Activated B cell treated with CpG ODN at 0.5 μM for 24 hours (primary cell): ENCODE measurements at regions of chr6 and their contacts with region 1.

Region 1: DNA sequence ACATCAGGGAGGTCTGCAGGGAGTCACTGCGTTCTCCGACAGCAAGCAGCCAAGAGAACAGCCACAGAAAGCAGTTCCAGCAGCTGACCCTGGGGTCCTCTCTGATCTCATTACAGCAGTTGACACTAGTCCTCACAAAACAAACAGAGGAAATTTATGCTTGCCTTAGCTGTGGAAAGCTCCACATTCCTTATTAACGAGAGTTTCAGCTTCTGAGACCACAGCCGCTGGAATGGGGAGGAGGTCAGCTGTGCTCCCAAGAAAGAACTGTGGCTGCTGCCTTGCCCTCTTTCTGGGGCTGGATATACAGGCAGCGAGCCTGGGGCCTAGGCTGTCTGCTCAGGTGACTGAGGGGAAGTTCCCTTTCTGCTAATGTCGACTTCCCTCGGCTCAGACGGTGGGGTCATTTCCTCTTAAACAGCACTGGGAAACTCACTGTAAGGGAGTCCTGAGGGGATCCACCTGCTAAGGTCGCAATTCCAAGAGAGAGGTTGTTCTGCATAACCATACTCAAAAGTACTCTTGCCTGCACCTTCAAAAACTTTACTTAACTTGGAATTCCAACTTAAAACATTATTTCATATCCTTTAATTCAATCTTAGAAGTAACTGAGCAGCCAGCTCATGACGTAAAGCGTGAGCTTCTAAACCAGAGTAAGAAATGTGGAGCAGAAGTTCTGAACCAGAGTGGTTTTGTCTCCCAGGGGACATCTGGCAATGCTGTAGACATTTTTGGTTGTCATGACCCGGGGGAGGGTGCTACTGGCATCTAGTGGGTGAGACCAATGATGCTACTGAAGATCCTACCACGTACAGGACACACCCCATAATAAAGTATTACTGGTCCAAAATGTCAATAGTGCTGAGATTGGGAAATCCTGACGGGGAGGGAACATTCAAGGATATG is 80.3 kb downstream of the BACH2 start:
- DNase-seq: peak; percentile 52
- ATAC-seq: peak; percentile 80
- H3K4me3 Mint-ChIP-seq: peak overlapping the region; percentile 73
- H3K27ac Mint-ChIP-seq: no peak overlapping the region
- H3K4me1 Mint-ChIP-seq: peaks cover under 1% of the 10 kb centered on the region
- H3K27me3 Mint-ChIP-seq: no peaks in the 10 kb centered on the region
- CTCF ChIP-seq: no peak

Region 2: DNA sequence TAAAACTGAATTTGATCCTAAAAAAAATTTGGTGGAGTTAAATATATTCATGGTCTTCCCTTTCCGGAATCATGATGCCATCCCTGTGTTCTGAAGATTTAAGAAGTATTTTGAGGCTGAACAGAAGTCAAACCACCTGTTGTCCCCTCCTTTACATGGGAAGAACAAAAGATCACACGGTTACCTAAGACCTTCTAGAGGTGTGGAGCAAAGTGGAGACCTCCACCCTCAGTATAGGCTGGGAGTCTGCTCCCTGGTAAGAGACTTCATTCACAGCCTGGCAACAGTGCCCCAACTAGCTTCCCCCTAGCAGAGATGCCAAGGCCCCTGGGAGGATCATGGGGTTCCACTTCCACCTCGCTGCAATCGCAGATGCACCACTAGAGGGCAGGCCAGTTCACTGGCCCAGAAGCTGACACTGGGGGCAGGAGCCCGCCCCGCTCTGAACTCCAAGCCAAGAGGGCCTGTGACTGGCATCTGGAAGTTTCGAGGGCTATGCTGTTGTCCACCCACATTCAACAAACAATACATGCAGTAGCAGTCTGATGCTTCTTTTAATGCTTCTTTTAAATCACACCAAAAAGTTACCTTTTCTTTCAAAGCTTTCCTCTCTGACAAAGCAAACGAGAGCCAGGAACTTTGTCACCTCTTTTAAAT is 844.3 kb before region 1 on chr6:
- CTCF ChIA-PET with region 1: no interaction called
- POLR2A ChIA-PET with region 1: interaction called, 10 read pairs
- intact Hi-C with region 1: no loop called
- DNase-seq: peak; percentile 74
- ATAC-seq: peak; percentile 93
- H3K4me3 Mint-ChIP-seq: no peak overlapping the region
- H3K27ac Mint-ChIP-seq: no peak overlapping the region
- H3K4me1 Mint-ChIP-seq: peaks cover 41% of the 10 kb centered on the region
- H3K27me3 Mint-ChIP-seq: no peaks in the 10 kb centered on the region
- CTCF ChIP-seq: peak; percentile 49

Region 3: DNA sequence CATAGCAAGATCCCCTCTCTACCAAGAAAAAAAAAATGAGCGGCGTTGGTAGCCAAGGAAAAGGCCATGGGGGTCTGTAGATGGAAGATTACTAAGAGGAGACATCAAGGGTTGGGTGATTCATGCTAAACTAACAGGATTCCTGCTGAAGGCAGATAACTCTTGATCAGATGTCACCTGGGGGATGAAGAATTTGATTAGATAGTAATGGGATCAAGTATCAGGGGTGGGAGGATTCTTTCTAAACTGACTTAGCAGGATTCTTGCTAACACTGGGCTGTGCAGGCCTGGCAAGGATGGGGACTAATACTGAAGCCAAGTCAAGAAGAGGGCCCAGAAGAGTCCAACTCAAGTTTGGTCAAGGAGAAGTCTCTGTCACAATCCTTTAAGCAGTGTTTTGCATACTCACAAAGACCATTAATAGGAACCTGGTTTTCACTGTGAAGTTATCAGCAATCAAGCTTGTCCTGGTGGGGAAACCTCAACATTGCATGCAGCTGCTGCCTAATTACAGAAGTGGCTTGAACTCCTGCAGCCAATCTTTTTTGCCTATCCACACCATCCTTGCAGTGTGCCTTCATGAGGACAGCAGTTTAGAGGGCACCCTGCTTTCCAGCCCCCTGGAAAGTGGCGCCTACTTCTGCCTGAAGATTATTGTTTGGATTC is 722.1 kb before region 1 on chr6:
- CTCF ChIA-PET with region 1: no interaction called
- POLR2A ChIA-PET with region 1: no interaction called
- intact Hi-C with region 1: no loop called
- DNase-seq: no peak
- ATAC-seq: no peak
- H3K4me3 Mint-ChIP-seq: no peak overlapping the region
- H3K27ac Mint-ChIP-seq: no peak overlapping the region
- H3K4me1 Mint-ChIP-seq: no peaks in the 10 kb centered on the region
- H3K27me3 Mint-ChIP-seq: peaks cover 2% of the 10 kb centered on the region
- CTCF ChIP-seq: no peak

Region 4: GRCh38 chr6:89970609-89971337 is 245.6 kb before region 1 on chr6:
- CTCF ChIA-PET with region 1: interaction called, 18 read pairs
- POLR2A ChIA-PET with region 1: no interaction called
- intact Hi-C with region 1: loop called (anchors 1 kb)
- DNase-seq: no peak
- ATAC-seq: peak; percentile 61
- H3K4me3 Mint-ChIP-seq: no peak overlapping the region
- H3K27ac Mint-ChIP-seq: no peak overlapping the region
- H3K4me1 Mint-ChIP-seq: peaks cover 12% of the 10 kb centered on the region
- H3K27me3 Mint-ChIP-seq: no peaks in the 10 kb centered on the region
- CTCF ChIP-seq: no peak

Region 5: DNA sequence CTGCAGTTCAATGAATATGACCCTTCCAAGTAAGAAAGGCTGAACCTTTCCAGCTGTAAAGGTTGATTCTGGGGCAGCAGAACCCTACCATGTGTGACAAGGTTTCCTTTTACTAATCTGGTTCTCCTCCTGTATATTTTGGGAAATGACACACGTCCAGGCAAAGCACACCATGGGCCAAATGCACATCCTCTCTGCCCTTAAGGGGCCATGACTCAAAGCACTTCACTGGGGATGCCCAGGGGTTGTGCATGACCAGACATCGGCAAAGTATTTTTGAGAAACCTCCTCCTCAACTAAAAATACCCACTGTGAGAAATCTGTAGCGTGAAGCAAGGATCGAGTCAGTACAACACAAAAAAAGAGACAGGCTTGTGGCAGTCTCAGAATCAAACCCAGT is 94.3 kb before region 1 on chr6:
- CTCF ChIA-PET with region 1: interaction called, 11 read pairs
- POLR2A ChIA-PET with region 1: interaction called, 4 read pairs
- intact Hi-C with region 1: loop called (anchors 5 kb)
- DNase-seq: no peak
- ATAC-seq: peak; percentile 92
- H3K4me3 Mint-ChIP-seq: peak overlapping the region; percentile 53
- H3K27ac Mint-ChIP-seq: peak overlapping the region; percentile 79
- H3K4me1 Mint-ChIP-seq: peaks cover 81% of the 10 kb centered on the region
- H3K27me3 Mint-ChIP-seq: no peaks in the 10 kb centered on the region
- CTCF ChIP-seq: no peak

Region 6: DNA sequence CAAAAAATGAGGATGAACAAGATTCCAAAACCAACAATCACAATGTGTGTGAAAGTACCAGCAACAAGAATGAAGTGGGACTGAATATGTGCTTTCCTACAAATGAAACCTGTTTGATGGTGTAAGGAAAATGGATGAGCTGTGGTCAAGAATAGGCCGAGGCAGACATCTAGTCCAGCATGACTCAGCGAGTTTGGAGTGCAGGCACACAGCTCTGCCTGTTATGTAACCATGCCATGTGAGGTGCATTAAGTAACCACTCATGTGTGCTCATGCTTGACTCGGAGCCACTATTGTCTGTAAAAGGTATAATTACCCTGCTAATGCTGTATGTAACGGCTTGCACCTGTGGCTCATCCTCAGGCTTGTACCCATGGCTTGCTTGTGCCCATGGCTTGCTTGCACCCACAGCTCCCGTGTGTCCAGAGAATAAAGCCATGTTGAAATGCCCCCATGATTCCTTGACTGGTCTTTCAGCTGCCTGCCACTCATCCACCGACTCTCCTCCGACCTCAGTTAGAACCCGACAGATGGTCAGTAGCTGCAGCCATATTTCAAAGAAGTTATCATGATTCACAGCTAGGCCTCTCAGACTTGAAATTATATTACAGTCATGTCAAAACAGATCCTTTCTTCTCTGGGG is 18.4 kb before region 1 on chr6:
- CTCF ChIA-PET with region 1: interaction called, 7 read pairs
- POLR2A ChIA-PET with region 1: interaction called, 12 read pairs
- intact Hi-C with region 1: loop called (anchors 1 kb)
- DNase-seq: no peak
- ATAC-seq: no peak
- H3K4me3 Mint-ChIP-seq: no peak overlapping the region
- H3K27ac Mint-ChIP-seq: peak overlapping the region; percentile 81
- H3K4me1 Mint-ChIP-seq: peaks cover 66% of the 10 kb centered on the region
- H3K27me3 Mint-ChIP-seq: no peaks in the 10 kb centered on the region
- CTCF ChIP-seq: no peak

Region 7: GRCh38 chr6:90285611-90286381 is 69.5 kb after region 1 on chr6:
- CTCF ChIA-PET with region 1: interaction called, 32 read pairs
- POLR2A ChIA-PET with region 1: interaction called, 56 read pairs
- intact Hi-C with region 1: loop called (anchors 1 kb)
- DNase-seq: no peak
- ATAC-seq: peak; percentile 67
- H3K4me3 Mint-ChIP-seq: peak overlapping the region; percentile 77
- H3K27ac Mint-ChIP-seq: peak overlapping the region; percentile 88
- H3K4me1 Mint-ChIP-seq: peaks cover 92% of the 10 kb centered on the region
- H3K27me3 Mint-ChIP-seq: no peaks in the 10 kb centered on the region
- CTCF ChIP-seq: no peak

Region 8: DNA sequence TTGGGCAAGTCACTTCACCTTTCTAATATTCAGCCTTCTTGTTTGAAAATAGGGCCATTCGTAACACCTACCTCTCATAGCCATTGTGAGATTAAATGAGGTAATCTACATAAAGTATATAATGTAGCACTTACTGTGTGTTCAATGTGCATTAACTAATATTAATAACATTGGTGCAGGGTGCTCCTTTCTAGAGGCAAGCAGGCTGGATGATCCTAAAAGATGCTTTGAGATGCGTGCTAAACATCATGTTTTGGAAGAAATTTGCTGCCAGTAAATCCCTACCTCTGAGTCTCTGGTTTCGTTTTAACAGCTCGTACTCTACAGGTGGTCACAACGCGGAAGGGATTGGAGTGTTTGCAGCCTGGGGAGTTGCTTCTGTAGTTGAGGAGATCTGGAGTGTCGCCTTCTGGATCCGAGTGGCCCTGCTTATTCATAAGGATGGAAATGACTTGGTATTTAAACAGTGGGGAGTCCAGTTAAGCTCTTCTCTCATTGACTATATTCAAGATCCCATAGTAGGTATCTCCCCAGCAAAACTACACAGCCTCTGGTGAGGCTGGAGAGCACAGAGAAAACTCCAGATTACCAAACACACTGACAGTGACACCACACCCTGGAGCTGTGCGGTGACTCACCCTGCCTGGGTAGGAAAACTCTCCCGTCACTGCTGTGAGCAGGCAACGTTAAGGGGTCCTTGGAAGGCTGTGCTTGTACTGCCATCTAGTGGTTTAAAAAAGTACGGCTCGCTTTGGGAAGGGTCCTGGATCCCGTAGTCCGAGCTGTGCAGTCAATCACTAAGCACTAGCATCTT is 262.7 kb after region 1 on chr6:
- CTCF ChIA-PET with region 1: interaction called, 13 read pairs
- POLR2A ChIA-PET with region 1: interaction called, 8 read pairs
- intact Hi-C with region 1: loop called (anchors 1 kb)
- DNase-seq: peak; percentile 54
- ATAC-seq: peak; percentile 96
- H3K4me3 Mint-ChIP-seq: no peak overlapping the region
- H3K27ac Mint-ChIP-seq: peak overlapping the region; percentile 64
- H3K4me1 Mint-ChIP-seq: peaks cover 22% of the 10 kb centered on the region
- H3K27me3 Mint-ChIP-seq: no peaks in the 10 kb centered on the region
- CTCF ChIP-seq: peak; percentile 95